Naive thymus-derived CD4-positive, alpha-beta T cell (primary cell): ENCODE measurements at regions of chr14 and their contacts with region 1.

Region 1: DNA sequence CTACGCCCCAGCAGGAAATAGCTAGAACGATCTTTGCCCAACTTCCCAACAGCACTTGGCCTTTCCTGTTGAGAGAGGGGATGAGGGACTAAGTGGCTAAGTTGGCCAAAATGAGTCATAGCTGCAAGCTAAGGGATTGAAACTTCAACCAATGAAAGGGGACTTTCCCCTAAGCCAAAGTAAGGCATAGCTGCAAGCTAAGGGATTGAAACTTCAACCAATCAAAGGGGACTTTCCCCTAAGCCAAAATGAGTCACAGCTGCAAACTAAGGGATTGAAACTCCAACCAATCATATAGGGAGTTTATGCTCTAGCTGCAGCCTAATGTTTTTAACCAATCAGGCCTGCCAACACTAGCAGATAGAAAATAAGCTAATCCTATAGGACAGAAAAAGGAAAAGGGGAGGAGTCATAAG is 100.5 kb upstream of the SSTR1 start:
- DNase-seq: no peak
- ATAC-seq: no peak
- H3K4me3 ChIP-seq: no peak overlapping the region
- H3K4me3 Mint-ChIP-seq: no peak overlapping the region
- H3K27ac ChIP-seq: no peak overlapping the region
- H3K27ac Mint-ChIP-seq: peak overlapping the region in 1 of 9 donors; percentile 22
- H3K4me1 ChIP-seq: no peaks in the 10 kb centered on the region
- H3K4me1 Mint-ChIP-seq: peaks cover 0 to 21% (median 12%) of the 10 kb centered on the region in 7 donors
- H3K27me3 ChIP-seq: no peaks in the 10 kb centered on the region
- H3K27me3 Mint-ChIP-seq: no peaks in the 10 kb centered on the region

Region 2: DNA sequence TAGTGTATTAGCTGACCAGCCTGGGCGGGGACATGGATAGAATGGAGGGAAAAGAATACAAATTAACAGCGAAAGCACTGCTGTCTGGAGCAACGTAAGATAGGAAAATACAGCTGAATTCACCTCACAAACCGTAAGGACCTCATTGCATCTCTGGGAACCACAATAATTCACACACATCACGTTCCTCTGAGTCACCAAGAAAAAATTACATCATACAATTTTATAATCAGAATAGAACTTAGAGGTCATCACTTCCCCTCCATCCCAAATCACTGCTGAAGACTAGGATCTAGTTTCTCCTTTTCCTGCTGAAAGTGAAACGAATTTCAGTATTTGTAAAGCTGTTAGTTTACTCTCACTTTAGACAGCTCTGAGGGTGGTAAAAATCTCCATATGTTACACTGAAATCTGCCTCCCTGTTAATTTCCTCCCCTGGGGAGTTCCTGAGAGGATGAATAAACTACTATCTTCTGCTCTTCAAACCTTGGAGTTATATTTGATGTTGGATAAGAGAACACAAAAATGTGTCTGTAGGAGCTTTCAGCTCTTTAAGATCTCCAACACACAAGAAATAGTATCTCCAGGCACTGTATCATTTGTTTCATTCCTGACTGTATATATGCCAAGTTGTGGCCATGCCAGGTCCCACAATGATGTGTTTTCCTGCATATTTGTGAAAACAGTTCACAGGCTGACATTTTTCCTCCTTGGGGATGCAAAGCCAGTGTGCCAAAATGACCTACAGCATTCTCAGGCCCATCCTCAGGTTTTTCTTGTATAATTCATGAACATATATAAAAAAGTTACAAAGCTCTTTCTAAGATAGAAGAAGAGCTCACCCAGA is 36.7 kb after region 1 on chr14:
- CTCF ChIA-PET with region 1: no interaction called
- POLR2A ChIA-PET with region 1: no interaction called
- intact Hi-C with region 1: loop called in 1 of 2 experiments (anchors 5 kb)
- DNase-seq: no peak
- ATAC-seq: no peak
- H3K4me3 ChIP-seq: no peak overlapping the region
- H3K4me3 Mint-ChIP-seq: no peak overlapping the region
- H3K27ac ChIP-seq: no peak overlapping the region
- H3K27ac Mint-ChIP-seq: no peak overlapping the region
- H3K4me1 ChIP-seq: no peaks in the 10 kb centered on the region
- H3K4me1 Mint-ChIP-seq: peaks cover 0 to 15% (median 4%) of the 10 kb centered on the region in 7 donors
- H3K27me3 ChIP-seq: no peaks in the 10 kb centered on the region
- H3K27me3 Mint-ChIP-seq: peaks cover 0 to 2% (median 0%) of the 10 kb centered on the region in 5 donors